Activated naive CD4-positive, alpha-beta T cell treated with anti-CD3 and anti-CD28 coated beads, Interleukin-2, amount 10 ng/mL, durations not matched to agents 7 days and 5 days (primary cell): ENCODE measurements at regions of chr9 and their contacts with region 1.

Region 1: GRCh38 chr9:36560857-36561221 is 11.9 kb upstream of the MELK start:
- DNase-seq: no peak
- H3K4me3 Mint-ChIP-seq: no peak overlapping the region
- H3K27ac Mint-ChIP-seq: no peak overlapping the region
- H3K4me1 Mint-ChIP-seq: peaks cover under 1% of the 10 kb centered on the region
- H3K27me3 Mint-ChIP-seq: peaks cover 5% of the 10 kb centered on the region

Region 2: GRCh38 chr9:36400332-36401163 is 160.3 kb before region 1 on chr9:
- CTCF ChIA-PET with region 1: interaction called, 175 read pairs
- DNase-seq: peak; percentile 91
- H3K4me3 Mint-ChIP-seq: peak overlapping the region; percentile 93
- H3K27ac Mint-ChIP-seq: peak overlapping the region; percentile 98
- H3K4me1 Mint-ChIP-seq: peaks cover 41% of the 10 kb centered on the region
- H3K27me3 Mint-ChIP-seq: no peaks in the 10 kb centered on the region

Region 3: DNA sequence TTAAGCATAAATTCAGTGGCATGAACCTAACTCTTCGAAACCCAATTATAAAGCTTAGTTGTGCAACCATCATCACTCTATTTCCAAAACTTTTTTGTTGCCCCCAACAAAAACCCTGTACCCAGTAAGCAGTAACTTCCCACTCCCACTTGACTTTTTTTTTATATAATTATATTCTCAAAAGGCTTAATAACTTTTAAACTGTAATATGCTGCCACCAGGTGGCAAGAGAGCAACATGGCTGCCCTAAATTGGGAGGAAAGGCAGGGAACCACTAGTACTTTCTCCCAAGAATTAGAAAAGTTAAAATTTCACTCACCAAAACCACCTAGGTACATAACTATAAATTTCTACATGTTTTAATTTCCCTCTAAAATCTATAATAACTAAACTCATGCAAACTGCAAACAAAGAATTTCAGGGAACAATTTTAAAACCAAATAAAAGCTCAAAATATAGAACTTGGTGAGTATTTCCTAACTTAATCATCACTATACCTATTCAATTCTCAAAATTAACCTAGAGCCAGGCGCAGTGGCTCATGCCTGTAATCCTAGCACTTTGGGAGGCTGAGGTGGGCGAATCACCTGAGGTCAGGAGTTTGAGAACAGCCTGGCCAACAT is 110.6 kb before region 1 on chr9:
- CTCF ChIA-PET with region 1: interaction called, 18 read pairs
- DNase-seq: peak; percentile 45
- H3K4me3 Mint-ChIP-seq: no peak overlapping the region
- H3K27ac Mint-ChIP-seq: no peak overlapping the region
- H3K4me1 Mint-ChIP-seq: peaks cover 7% of the 10 kb centered on the region
- H3K27me3 Mint-ChIP-seq: no peaks in the 10 kb centered on the region

Region 4: DNA sequence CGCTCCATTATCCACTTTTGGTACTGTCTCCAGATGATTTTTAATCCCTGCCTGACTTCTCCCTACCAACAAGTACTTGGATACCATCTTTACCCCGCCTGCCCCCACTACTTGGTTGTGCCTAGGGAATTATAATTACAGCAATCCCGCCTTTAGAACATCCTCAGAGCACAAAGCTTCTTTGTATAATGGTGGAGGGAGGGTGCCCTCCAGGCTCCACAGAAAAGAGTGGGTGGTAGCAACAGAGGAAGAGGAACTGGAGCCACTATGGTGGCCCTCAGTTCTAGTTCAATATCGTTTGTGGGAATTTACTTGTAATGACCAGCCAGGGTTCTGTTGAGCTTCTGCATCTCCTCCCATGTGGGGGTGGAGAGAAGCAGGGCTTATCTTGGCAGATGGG is 81.7 kb before region 1 on chr9:
- CTCF ChIA-PET with region 1: no interaction called
- DNase-seq: no peak
- H3K4me3 Mint-ChIP-seq: no peak overlapping the region
- H3K27ac Mint-ChIP-seq: no peak overlapping the region
- H3K4me1 Mint-ChIP-seq: peaks cover 11% of the 10 kb centered on the region
- H3K27me3 Mint-ChIP-seq: no peaks in the 10 kb centered on the region